ENCODE measurements at regions of chr5 and their contacts with region 1.

Region 1: DNA sequence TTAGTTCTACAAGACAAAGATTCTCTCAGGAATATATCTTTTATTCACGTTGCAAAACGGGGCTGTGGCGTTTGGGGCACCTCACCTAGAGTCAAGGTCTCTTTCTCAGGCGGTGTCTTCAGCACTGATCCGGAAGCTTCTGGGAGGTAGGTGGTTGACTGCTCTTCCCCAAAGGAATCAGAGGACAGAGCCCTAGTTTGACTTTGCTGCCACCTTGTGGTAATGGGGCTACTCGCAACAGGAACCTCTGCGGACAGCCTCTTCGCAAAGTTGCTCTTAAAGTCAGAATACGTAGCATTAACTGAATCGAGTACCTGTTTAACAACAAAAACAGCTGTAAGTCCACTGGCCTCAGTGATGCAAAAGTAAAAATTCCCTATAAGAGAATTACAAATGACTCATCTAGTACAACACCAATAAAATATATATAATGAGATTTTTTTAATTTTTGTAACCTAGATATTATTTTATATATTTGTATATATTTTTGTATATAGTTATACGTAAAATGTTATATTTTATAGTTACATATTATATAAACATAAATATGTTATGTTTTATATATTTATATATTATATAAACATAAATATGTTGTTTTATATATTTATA is 13.3 kb upstream of the GPX8 start:
- DNase-seq: peak; percentile 66 to 86 (median 75)
- H3K4me3 ChIP-seq: peak overlapping the region; percentile 27
- H3K4me3 Mint-ChIP-seq: peak overlapping the region in 6 of 7 donors; percentile 46 to 85 (median 66)
- H3K27ac ChIP-seq: no peak overlapping the region
- H3K27ac Mint-ChIP-seq: peak overlapping the region in 3 of 8 donors; percentile 24 to 59 (median 31)
- H3K4me1 ChIP-seq: peaks cover 14% of the 10 kb centered on the region
- H3K4me1 Mint-ChIP-seq: peaks cover 15 to 30% (median 19%) of the 10 kb centered on the region in 3 donors
- H3K27me3 ChIP-seq: no peaks in the 10 kb centered on the region
- H3K27me3 Mint-ChIP-seq: peaks cover 0 to 4% of the 10 kb centered on the region in 2 donors

Region 2: GRCh38 chr5:54905943-54906537 is 240.6 kb before region 1 on chr5:
- CTCF ChIA-PET with region 1: interaction called, 21 read pairs
- POLR2A ChIA-PET with region 1: no interaction called
- DNase-seq: peak; percentile 40 to 66 (median 50)
- H3K4me3 ChIP-seq: no peak overlapping the region
- H3K4me3 Mint-ChIP-seq: no peak overlapping the region
- H3K27ac ChIP-seq: no peak overlapping the region
- H3K27ac Mint-ChIP-seq: no peak overlapping the region
- H3K4me1 ChIP-seq: peaks cover 9% of the 10 kb centered on the region
- H3K4me1 Mint-ChIP-seq: peaks cover 9 to 12% (median 11%) of the 10 kb centered on the region in 3 donors
- H3K27me3 ChIP-seq: no peaks in the 10 kb centered on the region
- H3K27me3 Mint-ChIP-seq: peaks cover 0 to 4% of the 10 kb centered on the region in 2 donors

Region 3: GRCh38 chr5:54959673-54960418 is 186.8 kb before region 1 on chr5:
- CTCF ChIA-PET with region 1: interaction called, 10 read pairs
- POLR2A ChIA-PET with region 1: no interaction called
- DNase-seq: no peak
- H3K4me3 ChIP-seq: no peak overlapping the region
- H3K4me3 Mint-ChIP-seq: no peak overlapping the region
- H3K27ac ChIP-seq: no peak overlapping the region
- H3K27ac Mint-ChIP-seq: no peak overlapping the region
- H3K4me1 ChIP-seq: no peaks in the 10 kb centered on the region
- H3K4me1 Mint-ChIP-seq: peaks cover 7 to 13% (median 10%) of the 10 kb centered on the region in 3 donors
- H3K27me3 ChIP-seq: no peaks in the 10 kb centered on the region
- H3K27me3 Mint-ChIP-seq: no peaks in the 10 kb centered on the region

Region 4: DNA sequence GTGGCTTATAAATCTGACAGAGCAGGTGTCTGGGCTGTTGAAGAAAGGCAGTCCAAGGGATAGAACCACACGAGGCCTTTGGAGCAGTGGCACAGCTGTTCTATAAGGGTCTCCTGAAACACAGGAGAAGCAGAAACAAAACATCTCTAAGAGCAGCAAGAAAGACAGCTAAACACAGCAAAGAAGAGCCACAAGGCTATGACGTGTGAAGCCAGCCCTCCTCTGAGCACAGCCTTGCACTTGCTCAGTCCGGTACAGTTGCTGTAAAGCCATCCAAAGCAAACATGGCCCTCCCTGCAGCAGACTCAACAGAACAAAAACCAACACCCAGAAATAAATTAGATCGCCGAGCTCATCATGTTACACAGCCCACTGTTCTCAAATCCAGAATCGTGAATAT is 125.2 kb before region 1 on chr5:
- CTCF ChIA-PET with region 1: interaction called, 10 read pairs
- POLR2A ChIA-PET with region 1: interaction called, 3 read pairs
- DNase-seq: peak in 2 of 5 donors; percentile 14 to 52
- H3K4me3 ChIP-seq: peak overlapping the region; percentile 7
- H3K4me3 Mint-ChIP-seq: peak overlapping the region; percentile 68 to 90 (median 83)
- H3K27ac ChIP-seq: no peak overlapping the region
- H3K27ac Mint-ChIP-seq: peak overlapping the region; percentile 66 to 97 (median 84)
- H3K4me1 ChIP-seq: peaks cover 32% of the 10 kb centered on the region
- H3K4me1 Mint-ChIP-seq: peaks cover 50 to 69% (median 58%) of the 10 kb centered on the region in 3 donors
- H3K27me3 ChIP-seq: no peaks in the 10 kb centered on the region
- H3K27me3 Mint-ChIP-seq: peaks cover 0 to 3% of the 10 kb centered on the region in 2 donors

Region 5: DNA sequence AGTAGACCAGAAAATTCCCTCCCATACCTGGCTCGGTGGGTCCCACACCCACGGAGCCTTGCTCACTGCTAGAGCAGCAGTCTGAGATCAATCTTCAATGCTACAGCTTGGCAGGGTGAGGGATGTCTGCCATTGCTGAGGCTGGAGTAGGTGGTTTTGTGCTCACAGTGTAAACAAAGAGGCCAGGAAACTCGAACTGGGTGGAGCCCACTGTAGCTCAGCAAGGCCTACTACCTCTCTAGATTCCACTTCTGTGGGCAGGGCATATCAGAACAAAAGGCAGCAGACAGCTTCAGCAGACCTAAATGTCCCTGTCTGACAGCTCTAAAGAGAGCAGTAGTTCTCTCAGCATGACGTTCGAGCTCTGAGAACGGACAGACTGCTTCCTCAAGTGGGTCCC is 49.8 kb before region 1 on chr5:
- CTCF ChIA-PET with region 1: interaction called, 10 read pairs
- POLR2A ChIA-PET with region 1: no interaction called
- DNase-seq: peak; percentile 13 to 75 (median 56)
- H3K4me3 ChIP-seq: peak overlapping the region; percentile 9
- H3K4me3 Mint-ChIP-seq: peak overlapping the region; percentile 61 to 87 (median 70)
- H3K27ac ChIP-seq: peak overlapping the region; percentile 8
- H3K27ac Mint-ChIP-seq: peak overlapping the region; percentile 84 to 97 (median 89)
- H3K4me1 ChIP-seq: peaks cover 57% of the 10 kb centered on the region
- H3K4me1 Mint-ChIP-seq: peaks cover 83 to 92% (median 89%) of the 10 kb centered on the region in 3 donors
- H3K27me3 ChIP-seq: no peaks in the 10 kb centered on the region
- H3K27me3 Mint-ChIP-seq: no peaks in the 10 kb centered on the region

Measured in CD8-positive, alpha-beta memory T cell (primary cell).